SK-N-SH (cell line): ENCODE measurements at regions of chr11 and their contacts with region 1.

Region 1: GRCh38 chr11:35822815-35823495 is 120.9 kb upstream of the LDLRAD3 start:
- DNase-seq: no peak
- H3K4me3 ChIP-seq: no peak overlapping the region
- H3K27ac ChIP-seq: peak overlapping the region in 1 of 2 experiments; percentile 22; a peak in 2 of 4 replicates
- H3K4me1 ChIP-seq: peaks cover 6 to 12% of the 10 kb centered on the region in 2 experiments; a peak in 3 of 4 replicates
- H3K27me3 ChIP-seq: no peaks in the 10 kb centered on the region
- CTCF ChIP-seq: no peak
- EP300 ChIP-seq: no peak
- RAD21 ChIP-seq: no peak

Region 2: DNA sequence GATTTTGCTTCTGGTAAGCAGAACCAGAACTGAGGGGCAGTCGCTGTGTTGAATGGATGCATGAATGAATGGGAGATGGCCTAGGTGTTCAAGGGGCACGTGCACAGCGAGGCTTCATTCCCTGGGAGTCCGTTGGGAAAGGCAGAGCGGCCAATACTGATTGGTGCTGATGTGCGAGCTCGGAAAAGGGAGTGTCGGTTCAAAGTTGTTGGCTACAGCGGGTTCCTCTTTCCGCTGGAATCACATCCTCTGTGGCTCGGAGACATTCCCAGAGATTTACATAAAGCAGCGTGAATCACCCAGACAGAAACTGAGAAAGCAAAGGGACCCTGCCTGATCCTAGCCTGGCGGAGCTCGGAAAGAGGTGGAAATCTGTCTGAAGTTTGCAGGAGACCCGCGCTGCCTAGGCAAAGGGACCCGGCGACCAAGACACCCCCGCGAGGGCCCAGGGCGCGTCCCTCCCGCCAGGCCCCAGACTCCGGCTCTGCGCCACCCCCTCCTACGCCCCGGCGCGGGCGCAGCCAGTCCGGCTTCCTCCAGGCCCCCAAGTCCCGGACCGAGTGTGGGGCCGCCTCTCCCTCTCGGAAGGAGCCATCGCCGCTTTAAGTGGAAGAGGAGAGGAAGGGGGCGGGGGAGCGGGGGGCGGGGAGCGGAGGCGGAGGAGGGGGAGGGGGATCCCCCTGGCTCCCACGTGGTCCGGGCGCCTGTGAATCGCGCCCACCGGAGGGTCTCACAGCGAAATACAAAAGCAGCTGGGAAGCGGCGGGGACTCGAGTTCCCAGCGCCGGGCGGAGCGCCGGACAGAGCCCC is 205.1 kb before region 1 on chr11 and contains the start of gene FJX1:
- CTCF ChIA-PET with region 1: interaction called, 30 read pairs
- POLR2A ChIA-PET with region 1: interaction called, 5 read pairs
- DNase-seq: peak; percentile 96
- H3K4me3 ChIP-seq: peak within 1 kb of the TSS; percentile 71
- H3K27ac ChIP-seq: peak within 1 kb of the TSS; percentile 73 to 94
- H3K4me1 ChIP-seq: peaks cover 26 to 51% of the 10 kb centered on the region in 2 experiments
- H3K27me3 ChIP-seq: no peaks in the 10 kb centered on the region
- CTCF ChIP-seq: no peak
- EP300 ChIP-seq: no peak
- RAD21 ChIP-seq: peak; percentile 1; the same call in 1 of the 2 replicates
- polyA plus RNA-seq, gene FJX1: 29.8 and 34.5 TPM in 2 replicates

Region 3: DNA sequence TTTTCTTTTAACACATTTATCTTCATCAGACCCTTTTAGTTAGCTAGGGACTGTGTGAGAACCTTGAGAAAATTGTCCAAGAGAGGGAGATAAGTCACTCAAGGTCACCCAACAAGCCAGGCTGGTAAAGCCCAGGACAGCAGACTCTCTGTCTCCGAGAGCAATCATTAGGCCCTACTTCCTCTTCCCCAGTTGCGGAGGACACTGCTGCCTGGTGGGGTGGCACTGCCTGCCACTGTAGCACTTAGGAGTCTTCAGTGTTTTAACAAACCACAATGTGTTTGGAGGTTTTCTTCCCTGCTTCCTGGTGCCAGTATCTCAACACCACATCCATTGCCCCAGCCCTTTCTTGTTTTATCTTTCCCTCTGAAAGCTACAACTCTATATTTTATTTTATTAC is 11.2 kb before region 1 on chr11:
- CTCF ChIA-PET with region 1: interaction called, 38 read pairs
- POLR2A ChIA-PET with region 1: no interaction called
- DNase-seq: no peak
- H3K4me3 ChIP-seq: no peak overlapping the region
- H3K27ac ChIP-seq: no peak overlapping the region
- H3K4me1 ChIP-seq: peaks cover 0 to 3% of the 10 kb centered on the region in 2 experiments; a peak in 2 of 4 replicates
- H3K27me3 ChIP-seq: no peaks in the 10 kb centered on the region
- CTCF ChIP-seq: no peak
- EP300 ChIP-seq: no peak
- RAD21 ChIP-seq: no peak

Region 4: GRCh38 chr11:35955636-35956035 is 132.7 kb after region 1 on chr11:
- CTCF ChIA-PET with region 1: no interaction called
- POLR2A ChIA-PET with region 1: no interaction called
- DNase-seq: peak; percentile 22
- H3K4me3 ChIP-seq: no peak overlapping the region
- H3K27ac ChIP-seq: no peak overlapping the region
- H3K4me1 ChIP-seq: peaks cover 8 to 34% of the 10 kb centered on the region in 2 experiments; a peak in 3 of 4 replicates
- H3K27me3 ChIP-seq: no peaks in the 10 kb centered on the region
- CTCF ChIP-seq: no peak
- EP300 ChIP-seq: no peak
- RAD21 ChIP-seq: no peak

Region 5: DNA sequence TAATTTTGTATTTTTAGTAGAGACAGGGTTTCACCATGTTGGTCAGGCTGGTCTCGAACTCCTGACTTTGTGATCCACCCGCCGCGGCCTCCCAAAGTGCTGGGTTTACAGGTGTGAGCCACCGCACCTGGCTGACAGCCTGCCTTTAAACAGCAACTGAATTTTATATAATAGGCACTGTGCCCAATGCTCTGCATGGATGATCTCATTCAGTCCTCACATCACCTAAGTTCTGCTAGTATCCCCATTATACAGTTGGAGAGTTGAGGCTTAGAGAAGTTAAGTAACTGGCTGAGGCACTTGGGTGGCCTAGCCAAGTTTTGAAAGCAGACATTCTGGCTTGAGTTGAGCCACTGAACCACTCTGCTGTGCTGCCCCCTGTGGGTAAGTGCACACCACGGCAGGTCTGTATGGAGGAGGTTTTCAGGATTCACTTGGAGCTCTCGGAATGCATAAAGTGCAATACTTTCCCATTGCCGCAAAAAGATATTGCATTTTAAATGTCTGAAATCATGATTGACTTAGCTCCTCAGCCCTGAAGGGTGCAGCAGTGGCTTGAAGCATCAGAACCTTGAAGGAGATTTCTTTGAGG is 233.3 kb after region 1 on chr11:
- CTCF ChIA-PET with region 1: interaction called, 21 read pairs
- POLR2A ChIA-PET with region 1: no interaction called
- DNase-seq: peak; percentile 55
- H3K4me3 ChIP-seq: no peak overlapping the region
- H3K27ac ChIP-seq: no peak overlapping the region
- H3K4me1 ChIP-seq: peaks cover 0 to 2% of the 10 kb centered on the region in 2 experiments; a peak in 1 of 4 replicates
- H3K27me3 ChIP-seq: no peaks in the 10 kb centered on the region
- CTCF ChIP-seq: peak; percentile 66
- EP300 ChIP-seq: no peak
- RAD21 ChIP-seq: peak; percentile 78

Region 6: DNA sequence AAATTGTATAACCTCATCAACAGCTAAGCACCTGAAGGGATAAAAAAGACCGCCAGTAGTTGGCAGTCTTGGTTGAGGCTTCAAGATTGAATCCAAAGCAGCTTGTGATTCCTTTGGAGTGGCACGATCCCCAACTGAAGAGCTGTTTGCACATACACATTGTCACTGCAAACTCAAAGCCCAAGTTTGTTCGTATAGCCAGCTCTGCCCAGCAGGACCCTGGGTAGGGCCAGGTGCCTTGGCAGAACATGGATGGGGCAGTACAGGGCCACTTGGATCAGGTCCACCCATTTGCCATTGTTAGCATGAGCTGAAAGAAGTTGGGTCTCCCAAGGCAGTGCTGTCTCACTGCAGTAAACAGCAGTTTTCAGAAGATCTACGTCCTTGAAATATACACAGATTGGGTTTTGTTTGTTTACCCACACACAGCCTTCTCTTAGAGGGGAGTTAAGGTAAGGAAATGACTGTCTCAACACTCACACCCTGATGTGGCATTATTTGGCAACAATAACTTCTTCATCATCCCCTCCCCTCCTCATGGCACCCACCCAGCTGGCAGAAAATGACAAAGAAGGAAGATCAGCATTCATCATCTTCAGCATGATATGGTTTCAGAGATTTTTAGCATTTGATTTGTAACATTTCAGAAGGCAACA is 333.3 kb after region 1 on chr11:
- CTCF ChIA-PET with region 1: interaction called, 23 read pairs
- POLR2A ChIA-PET with region 1: no interaction called
- DNase-seq: no peak
- H3K4me3 ChIP-seq: no peak overlapping the region
- H3K27ac ChIP-seq: peak overlapping the region; percentile 46 to 58; a peak in 3 of 4 replicates
- H3K4me1 ChIP-seq: peaks cover 21 to 28% of the 10 kb centered on the region in 2 experiments; a peak in 3 of 4 replicates
- H3K27me3 ChIP-seq: no peaks in the 10 kb centered on the region
- CTCF ChIP-seq: no peak
- EP300 ChIP-seq: peak in 1 of 2 experiments; percentile 63; a peak in 2 of 4 replicates
- RAD21 ChIP-seq: no peak

Region 7: GRCh38 chr11:36265793-36266628 is 443.1 kb after region 1 on chr11:
- CTCF ChIA-PET with region 1: interaction called, 88 read pairs
- POLR2A ChIA-PET with region 1: no interaction called
- DNase-seq: peak; percentile 81
- H3K4me3 ChIP-seq: no peak overlapping the region; a peak in 1 of 4 replicates
- H3K27ac ChIP-seq: no peak overlapping the region
- H3K4me1 ChIP-seq: peaks cover 0 to 6% of the 10 kb centered on the region in 2 experiments; a peak in 1 of 4 replicates
- H3K27me3 ChIP-seq: no peaks in the 10 kb centered on the region
- CTCF ChIP-seq: peak; percentile 93
- EP300 ChIP-seq: no peak
- RAD21 ChIP-seq: peak; percentile 91